Endothelial cell of umbilical vein (primary cell): ENCODE measurements at regions of chr1 and their contacts with region 1.

Region 1: DNA sequence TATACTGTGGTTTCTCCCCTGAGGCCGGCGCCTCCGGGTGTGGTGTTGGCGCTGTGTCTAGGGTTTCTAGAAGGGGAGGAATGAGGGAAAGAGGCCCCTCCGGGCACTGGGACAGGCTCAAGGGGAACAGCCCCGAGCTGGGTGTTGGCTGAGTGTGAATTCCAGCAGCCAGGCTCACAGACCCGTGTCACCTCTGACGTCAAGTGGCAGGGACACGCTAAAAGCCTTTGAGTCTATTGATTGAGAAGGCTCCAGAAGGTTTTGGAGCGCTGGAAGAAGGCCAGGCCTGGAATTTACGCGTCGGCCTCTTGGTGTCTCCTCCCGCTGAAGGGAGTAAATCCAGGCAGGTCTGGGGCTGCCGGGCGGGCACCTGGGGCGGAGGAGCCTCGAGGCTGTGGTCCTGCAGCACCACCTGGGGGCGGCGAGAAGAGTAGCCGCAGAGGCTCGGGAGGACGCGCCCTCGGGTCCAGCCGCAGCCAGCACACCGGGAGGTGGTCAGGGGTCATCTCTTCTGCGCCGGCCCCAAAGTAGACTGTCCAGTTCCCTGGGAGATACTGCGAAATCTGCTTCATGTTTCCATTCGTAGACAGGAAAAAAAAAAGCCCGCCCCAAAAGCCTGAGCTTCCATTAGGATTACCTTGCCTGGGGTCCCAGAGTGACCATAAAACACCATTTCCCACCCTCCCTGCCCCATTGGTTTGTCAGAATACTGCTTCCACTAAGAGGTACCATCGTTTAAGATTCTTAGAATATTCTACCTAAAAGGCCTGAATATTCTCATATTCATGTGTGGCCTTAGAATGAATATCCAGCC is 61.7 kb downstream of the TLR5 start:
- DNase-seq: peak; percentile 77
- H3K4me3 ChIP-seq: no peak overlapping the region
- H3K27ac ChIP-seq: no peak overlapping the region
- H3K4me1 ChIP-seq: peaks cover 6% of the 10 kb centered on the region
- H3K27me3 ChIP-seq: peaks cover 0 to 1% of the 10 kb centered on the region in 2 experiments
- CTCF ChIP-seq: peak; percentile 91 to 96
- POLR2A ChIP-seq: no peak

Region 2: DNA sequence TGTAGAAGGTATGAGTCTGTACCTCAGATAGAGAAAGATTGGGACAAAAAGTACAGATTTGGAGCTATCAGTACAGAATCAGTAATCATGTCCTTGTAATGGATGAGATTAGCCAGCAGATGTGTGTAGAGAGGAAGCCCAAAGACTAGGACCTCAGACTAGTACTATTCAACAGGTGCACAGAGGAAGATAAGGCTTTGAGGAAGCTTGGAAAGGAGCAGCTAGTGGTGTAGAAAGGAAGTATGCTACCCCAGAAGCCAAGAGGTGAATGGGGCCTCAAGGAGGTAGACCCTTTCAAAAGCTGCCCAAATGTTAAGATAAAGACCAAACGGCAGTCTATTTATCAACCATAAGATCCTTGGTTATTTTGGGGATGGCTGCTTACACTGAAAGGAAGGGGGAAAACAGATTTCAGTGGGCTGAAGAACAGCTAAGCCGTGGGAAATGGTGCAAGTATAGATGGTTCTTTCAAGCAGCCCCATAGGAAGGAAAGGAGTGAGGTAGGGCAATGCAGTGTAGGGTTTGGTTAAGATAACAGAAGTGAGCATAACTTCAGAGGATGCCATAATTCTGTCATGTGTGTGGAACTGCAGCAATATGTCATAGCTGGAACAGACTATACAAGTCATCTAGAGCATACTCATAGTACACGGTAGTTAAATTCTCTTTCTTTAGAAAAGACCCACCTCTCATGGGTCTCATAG is 755.2 kb before region 1 on chr1:
- CTCF ChIA-PET with region 1: no interaction called
- POLR2A ChIA-PET with region 1: no interaction called
- dilution Hi-C with region 1: no loop called
- intact Hi-C with region 1: no loop called
- DNase-seq: no peak
- H3K4me3 ChIP-seq: no peak overlapping the region
- H3K27ac ChIP-seq: no peak overlapping the region
- H3K4me1 ChIP-seq: no peaks in the 10 kb centered on the region
- H3K27me3 ChIP-seq: no peaks in the 10 kb centered on the region
- CTCF ChIP-seq: no peak
- POLR2A ChIP-seq: no peak

Region 3: GRCh38 chr1:222634180-222635013 is 447.0 kb before region 1 on chr1:
- CTCF ChIA-PET with region 1: no interaction called
- POLR2A ChIA-PET with region 1: no interaction called
- dilution Hi-C with region 1: no loop called
- intact Hi-C with region 1: loop called (anchors 2 kb)
- DNase-seq: peak; percentile 93
- H3K4me3 ChIP-seq: no peak overlapping the region
- H3K27ac ChIP-seq: no peak overlapping the region
- H3K4me1 ChIP-seq: no peaks in the 10 kb centered on the region
- H3K27me3 ChIP-seq: no peaks in the 10 kb centered on the region
- CTCF ChIP-seq: peak; percentile 64 to 72
- POLR2A ChIP-seq: no peak

Region 4: GRCh38 chr1:222713091-222713961 is 368.1 kb before region 1 on chr1:
- CTCF ChIA-PET with region 1: no interaction called
- POLR2A ChIA-PET with region 1: no interaction called
- dilution Hi-C with region 1: no loop called
- intact Hi-C with region 1: loop called (anchors 1 kb)
- DNase-seq: peak; percentile 97
- H3K4me3 ChIP-seq: peak overlapping the region; percentile 54 to 98 (median 92)
- H3K27ac ChIP-seq: peak overlapping the region; percentile 90
- H3K4me1 ChIP-seq: peaks cover 14% of the 10 kb centered on the region
- H3K27me3 ChIP-seq: no peaks in the 10 kb centered on the region
- CTCF ChIP-seq: no peak
- POLR2A ChIP-seq: no peak

Region 5: GRCh38 chr1:222792744-222793143 is 288.6 kb before region 1 on chr1:
- CTCF ChIA-PET with region 1: interaction called, 59 read pairs
- POLR2A ChIA-PET with region 1: no interaction called
- dilution Hi-C with region 1: loop called (anchors 25 kb)
- intact Hi-C with region 1: loop called (anchors 1 kb)
- DNase-seq: peak; percentile 44
- H3K4me3 ChIP-seq: no peak overlapping the region
- H3K27ac ChIP-seq: no peak overlapping the region
- H3K4me1 ChIP-seq: peaks cover 10% of the 10 kb centered on the region
- H3K27me3 ChIP-seq: peaks cover 0 to 2% of the 10 kb centered on the region in 2 experiments
- CTCF ChIP-seq: peak; percentile 20 to 29
- POLR2A ChIP-seq: no peak

Region 6: GRCh38 chr1:223683586-223684487 is 602.4 kb after region 1 on chr1:
- CTCF ChIA-PET with region 1: no interaction called
- POLR2A ChIA-PET with region 1: no interaction called
- dilution Hi-C with region 1: no loop called
- intact Hi-C with region 1: loop called (anchors 5 kb)
- DNase-seq: peak; percentile 55
- H3K4me3 ChIP-seq: no peak overlapping the region
- H3K27ac ChIP-seq: no peak overlapping the region
- H3K4me1 ChIP-seq: no peaks in the 10 kb centered on the region
- H3K27me3 ChIP-seq: peaks cover 9 to 24% of the 10 kb centered on the region in 2 experiments
- CTCF ChIP-seq: peak; percentile 54 to 68
- POLR2A ChIP-seq: no peak